Spleen (tissue), 13 donors: ENCODE measurements at regions of chr17 and their contacts with region 1.

Region 1: DNA sequence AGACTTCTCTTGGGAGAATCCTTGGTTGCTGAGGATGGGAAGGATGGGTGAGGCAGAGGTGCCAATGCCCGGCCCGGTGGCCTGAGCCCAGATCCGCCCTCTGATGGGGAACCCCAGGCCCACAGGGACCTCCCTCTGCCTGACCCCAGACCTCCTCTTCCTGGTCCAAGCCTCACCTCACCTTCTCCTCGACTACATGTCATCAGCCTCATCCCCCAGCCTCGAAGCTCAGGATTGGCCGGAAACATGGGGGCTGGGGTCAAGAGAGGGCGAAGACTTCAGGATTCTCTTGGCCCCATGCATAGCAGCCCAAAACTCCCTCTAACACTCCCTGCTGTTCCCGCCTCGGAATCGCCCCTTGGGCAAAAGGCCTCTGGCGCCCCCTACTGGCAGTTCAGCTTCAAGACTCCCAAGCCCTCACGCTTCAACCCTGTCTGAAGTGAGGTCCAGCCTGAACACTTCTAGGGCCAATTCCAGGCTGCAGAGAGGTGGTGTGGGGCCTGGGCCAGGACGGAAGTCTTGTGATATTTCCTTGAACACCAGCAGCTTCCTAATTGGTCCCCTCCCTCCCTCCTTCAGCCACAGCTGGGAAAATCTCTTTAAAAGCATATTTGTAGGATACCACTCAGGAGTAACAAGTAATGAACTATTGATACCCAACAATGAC is 47.2 kb downstream of the ARHGAP27 start:
- DNase-seq: peak; percentile 96
- H3K4me3 ChIP-seq: no peak overlapping the region
- H3K27ac ChIP-seq: no peak overlapping the region
- H3K4me1 ChIP-seq: peaks cover 4 to 21% (median 7%) of the 10 kb centered on the region in 6 donors
- H3K27me3 ChIP-seq: peaks cover 0 to 37% (median 4%) of the 10 kb centered on the region in 7 donors
- CTCF ChIP-seq: peak; percentile 92 to 98 (median 97)
- POLR2A ChIP-seq: no peak

Region 2: DNA sequence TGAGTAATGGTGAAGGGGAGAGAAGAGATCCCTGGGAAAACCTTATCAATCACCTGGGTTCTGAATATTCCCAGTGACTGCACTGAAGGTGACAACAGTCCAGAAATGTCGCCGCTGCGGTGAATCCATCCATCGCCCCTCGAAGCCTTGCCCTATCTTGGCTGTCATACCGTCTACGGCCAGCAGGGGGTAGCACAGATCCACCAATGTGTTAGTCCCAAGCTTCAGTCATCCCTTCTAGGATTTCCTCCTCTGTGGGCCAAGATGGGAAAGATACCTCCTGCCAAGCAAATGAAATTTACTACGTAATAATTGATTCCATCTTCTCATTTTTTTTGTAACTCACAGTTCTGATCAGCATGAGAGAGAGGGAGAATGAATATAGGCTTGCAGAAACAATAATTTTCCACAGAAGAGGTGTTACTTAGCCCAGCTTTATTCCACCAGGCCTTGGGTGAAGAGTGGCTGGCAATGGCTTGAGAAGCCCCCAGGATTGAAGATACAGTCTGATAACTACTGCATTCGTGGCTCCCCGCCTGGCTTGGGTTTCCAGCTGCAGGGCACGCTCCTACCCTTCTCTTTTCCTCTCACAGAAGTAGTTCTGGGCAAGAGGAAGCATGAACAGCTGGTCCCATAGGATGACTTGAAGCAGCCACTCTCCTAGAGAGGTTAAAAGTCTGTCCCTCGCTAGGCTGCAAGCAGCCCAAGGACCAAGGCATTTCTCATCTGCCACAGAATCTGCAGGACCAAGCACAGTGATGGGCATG is 166.4 kb before region 1 on chr17:
- intact Hi-C with region 1: loop called (anchors 5 kb)
- DNase-seq: peak; percentile 94
- H3K4me3 ChIP-seq: no peak overlapping the region
- H3K27ac ChIP-seq: peak overlapping the region in 2 of 8 donors; percentile 58 to 99
- H3K4me1 ChIP-seq: peaks cover 12 to 48% (median 41%) of the 10 kb centered on the region in 6 donors
- H3K27me3 ChIP-seq: peaks cover 0 to 17% (median 0%) of the 10 kb centered on the region in 7 donors
- CTCF ChIP-seq: peak; percentile 92 to 99 (median 98)
- POLR2A ChIP-seq: no peak

Region 3: DNA sequence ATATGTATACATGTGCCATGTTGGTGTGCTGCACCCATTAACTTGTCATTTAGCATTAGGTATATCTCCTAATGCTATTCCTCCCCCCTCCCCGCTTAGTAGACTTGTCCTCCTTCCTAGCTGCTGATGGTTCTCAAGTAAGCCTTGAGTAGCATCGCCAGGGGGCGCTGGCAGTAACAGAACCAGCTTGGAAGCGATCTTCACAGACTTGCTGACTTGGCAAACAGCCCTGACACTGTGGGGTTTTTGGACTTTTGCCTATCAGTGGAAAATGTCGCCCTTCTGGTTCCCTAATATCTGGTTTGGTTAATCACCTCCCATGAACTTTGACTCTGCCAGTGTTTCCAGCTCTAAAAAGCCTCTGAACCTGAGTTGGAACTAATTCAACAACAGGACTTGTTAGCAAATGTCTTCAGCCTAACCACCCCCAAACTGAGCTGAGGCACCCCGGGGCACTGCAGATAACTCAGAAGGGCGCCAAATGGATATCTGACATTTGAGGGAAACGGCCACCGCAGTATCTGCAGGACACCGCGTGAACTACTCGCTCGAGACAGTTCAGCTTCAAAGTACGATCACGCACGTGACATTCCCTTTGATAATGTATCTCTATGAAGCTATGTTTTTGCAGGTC is 108.1 kb before region 1 on chr17:
- intact Hi-C with region 1: loop called (anchors 1 kb)
- DNase-seq: peak; percentile 97
- H3K4me3 ChIP-seq: no peak overlapping the region
- H3K27ac ChIP-seq: peak overlapping the region in 4 of 8 donors; percentile 8 to 49 (median 24)
- H3K4me1 ChIP-seq: peaks cover 6 to 20% (median 13%) of the 10 kb centered on the region in 6 donors
- H3K27me3 ChIP-seq: no peaks in the 10 kb centered on the region
- CTCF ChIP-seq: peak; percentile 80 to 94 (median 86)
- POLR2A ChIP-seq: no peak